WTC11 (cell line): ENCODE measurements at regions of chr5 and their contacts with region 1.

Region 1: DNA sequence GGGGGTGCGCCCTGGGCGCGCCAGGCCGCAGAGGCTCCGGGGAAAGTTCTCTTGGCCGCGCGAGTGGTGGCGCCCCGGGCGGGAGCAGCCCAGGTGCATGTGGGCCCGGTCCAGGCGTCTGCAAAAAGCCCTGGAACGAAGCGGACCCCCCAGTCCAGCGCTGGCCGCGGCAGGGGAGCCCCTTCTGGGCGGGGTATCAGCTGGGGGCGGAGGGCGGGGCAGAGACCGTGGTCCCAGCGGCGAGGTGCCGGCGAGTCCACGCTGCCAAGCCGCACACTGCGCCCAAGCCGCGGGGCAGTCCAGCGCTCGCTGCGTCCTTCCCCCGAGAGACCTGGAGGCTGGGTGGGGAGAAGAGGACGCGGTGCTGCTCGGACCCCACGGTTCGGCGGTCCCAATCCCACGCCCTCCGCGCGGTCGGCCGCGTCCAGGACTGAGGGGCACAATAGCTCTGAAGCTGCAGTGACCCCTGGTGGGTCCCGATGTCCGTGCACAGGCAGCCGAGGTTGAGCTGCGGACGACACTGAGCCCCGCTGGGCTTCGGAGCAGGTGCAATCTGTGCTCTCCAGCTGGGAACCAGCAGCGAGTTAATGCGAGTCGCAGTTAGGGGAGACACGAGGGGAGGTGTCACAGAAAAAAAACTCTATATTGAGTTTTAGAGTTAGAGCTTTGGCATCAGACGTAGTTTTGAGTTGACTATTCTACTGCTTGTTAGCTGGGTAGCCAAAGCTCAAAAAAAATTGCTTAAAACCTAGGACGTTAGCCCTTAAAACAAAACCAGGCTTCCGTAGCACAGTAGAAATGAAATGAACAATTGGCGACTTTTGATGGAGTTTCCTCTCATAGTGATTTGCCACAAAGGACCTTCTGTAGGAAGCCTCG is 1.1 kb upstream of the EPB41L4A start:
- DNase-seq: peak; percentile 90
- ATAC-seq: peak; percentile 85
- H3K4me3 Mint-ChIP-seq: peak overlapping the region; percentile 80
- H3K27ac Mint-ChIP-seq: no peak overlapping the region
- H3K4me1 Mint-ChIP-seq: peaks cover 21% of the 10 kb centered on the region
- H3K27me3 Mint-ChIP-seq: peaks cover 47% of the 10 kb centered on the region
- CTCF ChIP-seq: peak; percentile 77

Region 2: GRCh38 chr5:112174959-112175594 is 245.1 kb before region 1 on chr5:
- CTCF ChIA-PET with region 1: interaction called, 35 read pairs
- POLR2A ChIA-PET with region 1: interaction called, 4 read pairs
- DNase-seq: no peak
- ATAC-seq: peak; percentile 91
- H3K4me3 Mint-ChIP-seq: no peak overlapping the region
- H3K27ac Mint-ChIP-seq: no peak overlapping the region
- H3K4me1 Mint-ChIP-seq: peaks cover 11% of the 10 kb centered on the region
- H3K27me3 Mint-ChIP-seq: no peaks in the 10 kb centered on the region
- CTCF ChIP-seq: peak; percentile 59

Region 3: GRCh38 chr5:112210430-112211005 is 209.7 kb before region 1 on chr5:
- CTCF ChIA-PET with region 1: interaction called, 34 read pairs
- POLR2A ChIA-PET with region 1: interaction called, 3 read pairs
- DNase-seq: peak; percentile 38
- ATAC-seq: peak; percentile 40
- H3K4me3 Mint-ChIP-seq: no peak overlapping the region
- H3K27ac Mint-ChIP-seq: no peak overlapping the region
- H3K4me1 Mint-ChIP-seq: peaks cover 36% of the 10 kb centered on the region
- H3K27me3 Mint-ChIP-seq: peaks cover 2% of the 10 kb centered on the region; the same call in 1 of the 2 replicates
- CTCF ChIP-seq: peak; percentile 29; the same call in 1 of the 2 replicates

Region 4: DNA sequence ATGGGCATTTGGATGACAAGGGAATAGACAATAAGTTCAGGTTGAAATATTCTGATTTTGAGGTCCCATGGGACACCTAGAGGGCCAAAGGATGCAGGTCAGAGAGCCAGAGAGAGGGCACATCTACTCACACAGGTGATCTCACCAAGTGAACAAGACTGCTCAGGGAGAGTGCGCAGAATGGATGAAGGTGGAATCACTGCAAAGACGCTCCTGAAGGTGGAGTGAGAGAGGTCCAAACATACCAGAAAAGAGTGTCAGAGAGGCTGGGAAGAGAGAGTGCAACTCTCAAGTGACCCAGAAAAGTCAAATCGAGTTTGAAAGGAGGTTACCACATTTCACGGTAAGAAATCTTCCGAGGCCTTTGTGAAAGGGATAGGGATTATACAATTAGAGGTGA is 174.6 kb before region 1 on chr5:
- CTCF ChIA-PET with region 1: interaction called, 10 read pairs
- POLR2A ChIA-PET with region 1: no interaction called
- DNase-seq: no peak
- ATAC-seq: peak; percentile 96
- H3K4me3 Mint-ChIP-seq: no peak overlapping the region
- H3K27ac Mint-ChIP-seq: peak overlapping the region; percentile 61; the same call in 1 of the 2 replicates
- H3K4me1 Mint-ChIP-seq: peaks cover 14% of the 10 kb centered on the region
- H3K27me3 Mint-ChIP-seq: no peaks in the 10 kb centered on the region
- CTCF ChIP-seq: no peak

Region 5: DNA sequence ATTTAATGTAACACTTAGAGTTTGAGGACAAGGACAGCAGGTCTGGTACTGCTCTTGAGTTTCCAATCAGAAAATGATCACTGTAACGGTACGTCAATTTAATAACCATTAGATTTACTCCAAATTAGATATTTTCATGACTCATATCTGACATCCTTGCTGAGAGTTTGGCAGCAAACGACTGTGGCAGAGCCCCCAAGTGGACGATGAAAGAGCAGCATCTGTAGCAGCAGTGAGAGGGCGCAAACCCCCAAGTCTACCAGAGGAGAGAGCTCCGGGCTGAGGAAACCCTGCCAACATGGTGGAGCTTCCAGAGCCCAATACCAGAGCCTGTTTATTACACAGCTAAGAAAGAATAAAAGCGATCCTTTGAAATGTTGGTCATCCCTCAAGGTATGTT is 72.1 kb after region 1 on chr5:
- CTCF ChIA-PET with region 1: interaction called, 33 read pairs
- POLR2A ChIA-PET with region 1: no interaction called
- DNase-seq: peak; percentile 69
- ATAC-seq: peak; percentile 100
- H3K4me3 Mint-ChIP-seq: no peak overlapping the region
- H3K27ac Mint-ChIP-seq: no peak overlapping the region
- H3K4me1 Mint-ChIP-seq: no peaks in the 10 kb centered on the region
- H3K27me3 Mint-ChIP-seq: no peaks in the 10 kb centered on the region
- CTCF ChIP-seq: peak; percentile 42